Activated CD4-positive, alpha-beta memory T cell treated with anti-CD3 and anti-CD28 coated beads for 36 hours (primary cell): ENCODE measurements at regions of chr3 and their contacts with region 1.

Region 1: DNA sequence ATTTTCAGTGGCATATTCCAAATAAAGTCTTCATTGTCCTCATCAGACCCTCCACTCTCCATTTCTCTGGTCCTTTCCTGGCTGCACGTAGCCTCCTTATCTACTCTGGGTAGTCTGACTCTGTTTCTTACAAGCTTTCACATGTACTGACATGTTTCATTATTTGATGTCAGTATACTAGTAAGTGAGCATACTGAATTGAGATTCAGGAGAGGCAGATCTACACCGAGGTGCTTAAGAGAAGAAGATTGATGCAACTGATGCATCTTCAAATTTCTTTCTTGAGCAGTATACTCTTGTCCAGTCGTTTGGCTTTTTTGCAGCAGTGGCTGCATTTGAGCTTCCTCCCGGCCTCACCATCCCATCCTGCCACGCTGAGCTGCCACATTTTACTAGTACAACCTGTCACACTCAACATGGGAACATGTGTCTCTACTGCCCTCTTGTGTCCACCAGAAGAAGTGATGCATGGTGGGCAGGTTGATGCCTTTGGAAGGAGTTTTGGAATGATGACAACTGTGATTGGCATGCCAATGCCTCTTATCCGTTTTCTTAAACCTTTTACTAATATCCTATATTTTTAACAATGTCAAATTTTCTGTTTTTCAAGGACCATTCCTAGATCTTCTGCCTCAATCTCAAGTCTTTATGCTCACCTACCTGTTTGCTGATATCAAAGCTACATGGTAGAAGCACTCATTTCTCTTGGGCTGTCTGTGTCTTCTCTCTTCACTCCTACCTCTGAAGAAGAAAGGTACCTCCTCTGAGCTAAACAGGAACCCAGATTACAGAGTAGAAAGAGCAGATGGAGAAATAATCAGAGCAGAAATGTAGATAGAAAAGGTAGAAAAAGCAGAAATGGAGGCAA is 38.7 kb downstream of the GUCA1C start:
- DNase-seq: peak; percentile 73
- H3K4me3 Mint-ChIP-seq: peak overlapping the region; percentile 27
- H3K27ac Mint-ChIP-seq: no peak overlapping the region
- H3K4me1 Mint-ChIP-seq: peaks cover 11% of the 10 kb centered on the region
- H3K27me3 Mint-ChIP-seq: no peaks in the 10 kb centered on the region

Region 2: DNA sequence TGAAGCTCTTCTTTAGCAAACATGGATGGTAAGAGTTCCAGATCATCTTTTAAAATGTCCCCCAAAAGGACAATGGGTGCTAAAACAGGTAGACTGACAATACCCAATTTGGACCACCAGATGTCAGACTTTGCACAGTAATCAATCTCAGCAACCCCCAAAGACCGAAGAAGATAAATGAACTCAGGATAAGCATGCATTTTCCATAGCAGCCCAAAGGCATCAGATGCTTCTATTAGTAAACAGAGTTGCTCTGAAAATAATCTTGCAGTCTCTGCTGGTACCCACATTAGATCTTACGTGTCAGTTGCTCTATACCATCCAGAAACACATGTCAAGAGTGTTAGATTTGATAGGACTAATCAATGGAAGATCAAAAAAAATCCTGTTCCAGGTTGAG is 425.2 kb before region 1 on chr3:
- CTCF ChIA-PET with region 1: interaction called, 5 read pairs
- POLR2A ChIA-PET with region 1: no interaction called
- intact Hi-C with region 1: loop called (anchors 1 kb)
- DNase-seq: peak; percentile 12
- H3K4me3 Mint-ChIP-seq: no peak overlapping the region
- H3K27ac Mint-ChIP-seq: no peak overlapping the region
- H3K4me1 Mint-ChIP-seq: peaks cover 4% of the 10 kb centered on the region
- H3K27me3 Mint-ChIP-seq: no peaks in the 10 kb centered on the region

Region 3: DNA sequence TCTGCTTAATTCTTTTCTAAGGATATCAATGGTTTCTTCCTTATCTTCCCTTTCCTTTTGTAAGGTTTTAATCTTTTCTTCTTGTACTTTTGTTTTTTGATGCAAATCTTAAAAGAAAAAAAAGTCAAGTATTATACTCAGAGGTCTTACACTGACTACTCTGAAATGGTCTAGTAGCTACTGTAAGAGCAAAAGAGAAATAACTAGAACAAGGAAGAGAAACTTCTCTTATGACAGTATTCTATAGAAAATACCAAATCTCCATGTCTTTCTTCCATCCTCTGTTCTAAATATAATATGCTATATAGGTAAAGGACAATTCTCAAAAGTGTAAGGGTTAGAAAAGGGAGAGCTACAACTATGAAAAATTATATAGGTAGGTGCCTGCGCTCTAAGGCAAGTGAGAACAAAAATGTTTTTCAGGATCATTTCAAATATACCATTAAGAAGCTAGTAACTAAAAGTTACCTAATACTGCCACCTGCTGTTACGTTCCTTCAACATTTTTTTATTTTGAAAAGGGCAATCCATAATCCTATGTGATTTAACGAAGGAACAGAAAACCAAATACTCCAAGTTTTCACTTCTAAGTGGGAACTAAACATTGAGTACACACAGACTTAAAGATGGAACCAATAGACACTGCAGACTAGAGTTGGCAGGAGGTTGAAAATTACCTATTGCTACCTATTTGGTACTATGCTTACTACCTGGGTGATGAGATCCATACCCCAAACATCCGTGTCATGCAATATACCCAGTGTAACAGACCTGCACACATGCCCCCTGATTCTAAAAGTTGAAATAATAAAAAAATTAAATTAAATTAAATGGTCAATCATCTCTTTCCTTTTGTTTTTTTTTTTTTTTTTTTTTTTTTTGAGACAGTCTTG is 362.5 kb before region 1 on chr3:
- CTCF ChIA-PET with region 1: interaction called, 11 read pairs
- POLR2A ChIA-PET with region 1: no interaction called
- intact Hi-C with region 1: no loop called
- DNase-seq: no peak
- H3K4me3 Mint-ChIP-seq: no peak overlapping the region
- H3K27ac Mint-ChIP-seq: no peak overlapping the region
- H3K4me1 Mint-ChIP-seq: peaks cover 8% of the 10 kb centered on the region
- H3K27me3 Mint-ChIP-seq: no peaks in the 10 kb centered on the region

Region 4: GRCh38 chr3:108589146-108589997 is 325.6 kb before region 1 on chr3 and contains the starts of genes CIP2A and DZIP3:
- CTCF ChIA-PET with region 1: interaction called, 6 read pairs
- POLR2A ChIA-PET with region 1: no interaction called
- intact Hi-C with region 1: loop called (anchors 2 kb)
- DNase-seq: peak; percentile 90
- H3K4me3 Mint-ChIP-seq: peak within 1 kb of the TSS; percentile 99
- H3K27ac Mint-ChIP-seq: peak within 1 kb of the TSS; percentile 99
- H3K4me1 Mint-ChIP-seq: peaks cover 29% of the 10 kb centered on the region
- H3K27me3 Mint-ChIP-seq: no peaks in the 10 kb centered on the region
- total RNA-seq, gene CIP2A: 39.5 to 45.1 TPM
- total RNA-seq, gene DZIP3: 11.3 to 11.4 TPM

Region 5: DNA sequence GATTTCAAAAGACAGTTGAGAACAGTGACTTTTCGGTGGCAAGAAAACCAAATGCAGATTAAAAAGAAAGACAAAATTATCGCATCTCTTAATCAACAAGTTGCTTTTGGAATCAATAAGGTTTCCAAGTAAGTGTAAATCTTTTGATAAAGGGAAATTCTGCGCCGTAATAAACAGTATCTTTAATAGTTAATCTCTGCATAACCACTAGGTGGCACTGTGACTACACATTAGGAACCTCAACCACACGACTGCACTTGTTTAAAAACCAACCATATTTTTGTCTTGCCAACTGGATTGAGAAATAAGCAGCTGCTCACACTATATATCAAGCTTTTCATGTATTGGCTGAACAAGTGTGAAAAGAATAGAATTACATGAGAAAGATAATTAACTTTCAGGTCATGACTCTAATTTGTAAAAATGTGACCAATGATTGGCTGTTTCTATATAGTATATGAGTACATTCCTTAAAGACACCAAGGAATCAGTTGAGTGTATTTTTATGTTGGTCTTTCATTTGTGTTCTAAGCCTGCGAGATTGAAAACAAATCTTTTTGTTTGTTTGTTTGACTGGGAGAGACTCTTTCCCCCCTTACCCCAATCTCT is 252.8 kb before region 1 on chr3:
- CTCF ChIA-PET with region 1: interaction called, 127 read pairs
- POLR2A ChIA-PET with region 1: interaction called, 3 read pairs
- intact Hi-C with region 1: loop called (anchors 1 kb)
- DNase-seq: peak; percentile 40
- H3K4me3 Mint-ChIP-seq: no peak overlapping the region
- H3K27ac Mint-ChIP-seq: no peak overlapping the region
- H3K4me1 Mint-ChIP-seq: peaks cover 11% of the 10 kb centered on the region
- H3K27me3 Mint-ChIP-seq: no peaks in the 10 kb centered on the region

Region 6: DNA sequence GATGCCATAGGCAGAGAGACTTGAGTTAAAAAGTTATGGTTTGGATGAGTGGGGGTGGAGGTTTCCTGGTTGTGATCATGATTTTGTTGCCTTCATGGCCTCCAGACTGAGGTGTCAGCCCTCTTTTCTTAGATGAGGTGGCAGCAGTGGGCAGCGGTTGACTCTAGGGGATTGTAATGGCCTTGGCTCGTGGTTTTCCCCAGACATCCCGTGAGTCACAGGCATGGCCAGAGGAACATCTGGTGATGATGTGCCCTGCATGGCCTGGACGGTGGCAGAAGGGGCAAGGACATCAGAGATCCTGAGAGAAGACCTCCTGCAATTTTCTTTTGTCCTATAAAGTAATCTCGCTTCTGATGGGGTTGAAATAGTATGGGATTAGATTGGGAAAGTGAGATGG is 170.2 kb before region 1 on chr3:
- CTCF ChIA-PET with region 1: no interaction called
- POLR2A ChIA-PET with region 1: no interaction called
- intact Hi-C with region 1: no loop called
- DNase-seq: no peak
- H3K4me3 Mint-ChIP-seq: no peak overlapping the region
- H3K27ac Mint-ChIP-seq: no peak overlapping the region
- H3K4me1 Mint-ChIP-seq: no peaks in the 10 kb centered on the region
- H3K27me3 Mint-ChIP-seq: peaks cover 3% of the 10 kb centered on the region

Region 7: GRCh38 chr3:108818404-108818803 is 96.6 kb before region 1 on chr3:
- CTCF ChIA-PET with region 1: interaction called, 56 read pairs
- POLR2A ChIA-PET with region 1: interaction called, 3 read pairs
- intact Hi-C with region 1: loop called (anchors 1 kb)
- DNase-seq: peak; percentile 77
- H3K4me3 Mint-ChIP-seq: peak overlapping the region; percentile 35
- H3K27ac Mint-ChIP-seq: peak overlapping the region; percentile 59
- H3K4me1 Mint-ChIP-seq: peaks cover 29% of the 10 kb centered on the region
- H3K27me3 Mint-ChIP-seq: no peaks in the 10 kb centered on the region

Region 8: DNA sequence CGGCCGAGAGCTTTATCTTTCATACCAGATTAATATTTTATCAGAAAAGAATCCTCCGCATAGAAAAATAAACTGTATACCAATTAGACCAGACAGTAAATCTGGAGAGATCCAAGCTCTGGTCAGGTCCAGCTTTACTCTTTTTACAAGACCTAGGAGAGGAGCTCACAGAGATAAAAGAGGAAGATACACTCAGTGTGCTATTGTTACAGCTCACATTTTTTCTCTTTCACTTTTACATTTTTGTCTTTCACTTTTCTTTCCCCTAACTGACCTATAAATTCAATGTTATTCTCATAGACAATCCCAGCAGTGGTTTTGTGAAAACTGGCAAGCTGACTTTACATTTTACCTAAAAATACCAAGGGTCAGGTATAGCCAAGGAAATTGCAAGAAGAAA is 17.1 kb before region 1 on chr3:
- CTCF ChIA-PET with region 1: interaction called, 14 read pairs
- POLR2A ChIA-PET with region 1: no interaction called
- intact Hi-C with region 1: no loop called
- DNase-seq: no peak
- H3K4me3 Mint-ChIP-seq: no peak overlapping the region
- H3K27ac Mint-ChIP-seq: no peak overlapping the region
- H3K4me1 Mint-ChIP-seq: peaks cover 17% of the 10 kb centered on the region
- H3K27me3 Mint-ChIP-seq: no peaks in the 10 kb centered on the region